Activated naive CD8-positive, alpha-beta T cell treated with anti-CD3 and anti-CD28 coated beads, Interleukin-2, amount 10 ng/mL, durations not matched to agents 7 days and 5 days (primary cell): ENCODE measurements at regions of chr10 and their contacts with region 1.

Region 1: DNA sequence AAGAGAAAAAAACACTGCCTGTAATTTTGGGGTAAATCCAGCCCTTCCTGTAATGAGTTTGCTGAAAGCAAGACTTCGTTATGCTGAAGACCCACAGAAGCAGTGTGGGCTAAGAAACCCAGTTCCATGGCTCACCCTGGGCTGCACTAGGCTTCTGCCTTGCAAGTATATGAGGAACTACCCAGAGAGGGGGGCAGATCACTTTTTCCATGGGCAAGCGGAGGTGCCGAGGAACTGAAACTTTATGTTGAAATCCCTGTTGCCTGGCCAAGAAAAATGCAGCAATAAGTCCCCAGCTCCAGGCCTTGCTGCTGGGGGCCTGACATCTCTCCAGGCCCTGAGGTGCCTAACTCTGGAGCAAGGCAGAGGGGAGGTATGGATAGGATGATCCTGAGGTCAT is 8.5 kb downstream of the RASSF4 start:
- DNase-seq: no peak
- ATAC-seq: peak; percentile 4
- H3K4me3 Mint-ChIP-seq: peak overlapping the region; percentile 66
- H3K27ac Mint-ChIP-seq: peak overlapping the region; percentile 85
- H3K4me1 Mint-ChIP-seq: peaks cover 36% of the 10 kb centered on the region
- H3K27me3 Mint-ChIP-seq: no peaks in the 10 kb centered on the region

Region 2: DNA sequence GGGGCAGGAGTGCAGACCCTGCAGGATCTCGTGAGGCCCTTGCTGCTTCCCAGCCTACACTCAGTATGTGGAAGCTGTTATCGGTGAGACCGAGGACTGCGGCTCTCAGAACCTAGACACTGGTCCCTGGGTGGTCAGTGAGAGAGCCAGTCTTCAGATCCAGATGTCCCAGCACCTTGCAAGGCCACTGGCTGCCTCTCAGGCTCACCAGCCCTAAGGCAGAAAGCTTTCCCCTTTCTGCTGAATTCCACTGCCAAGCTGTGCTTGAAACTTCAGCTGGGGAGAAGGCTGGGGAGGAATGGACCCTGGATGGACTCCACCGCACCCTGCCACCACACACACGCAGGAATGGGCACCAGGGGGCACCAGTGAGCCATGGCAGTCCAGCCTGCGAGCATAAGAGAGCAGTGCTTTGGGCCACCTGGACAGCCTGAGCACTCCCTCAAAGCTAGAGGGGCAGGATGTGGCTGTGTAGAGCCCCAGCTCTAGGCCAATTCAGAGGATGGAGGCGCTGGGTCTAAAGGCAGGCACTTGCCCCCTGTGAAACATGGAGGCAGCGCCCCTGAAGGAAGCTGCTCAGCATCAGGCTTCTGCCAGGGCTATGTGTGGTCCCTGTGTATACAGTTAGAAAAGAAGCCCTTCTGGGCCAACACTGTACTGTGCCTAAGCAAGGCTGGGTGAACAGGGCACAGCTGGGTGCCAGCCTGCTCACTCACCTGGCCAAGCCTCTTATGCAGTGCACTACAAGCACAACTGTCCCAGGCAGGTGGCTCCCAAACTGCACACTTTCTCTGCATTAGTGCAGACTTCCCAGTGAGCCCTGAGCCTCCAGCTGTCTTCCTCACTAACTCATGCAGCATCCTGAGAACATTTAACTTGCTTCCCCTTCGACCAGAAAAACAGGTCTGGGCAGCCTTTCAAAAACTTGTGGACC is 35.3 kb before region 1 on chr10:
- POLR2A ChIA-PET with region 1: interaction called, 16 read pairs
- DNase-seq: peak; percentile 92
- ATAC-seq: peak; percentile 99
- H3K4me3 Mint-ChIP-seq: no peak overlapping the region
- H3K27ac Mint-ChIP-seq: peak overlapping the region; percentile 61
- H3K4me1 Mint-ChIP-seq: peaks cover 15% of the 10 kb centered on the region
- H3K27me3 Mint-ChIP-seq: no peaks in the 10 kb centered on the region